Heart right ventricle (tissue), 16 donors: ENCODE measurements at regions of chr9 and their contacts with region 1.

Region 1: GRCh38 chr9:136363606-136364370 is at the start of gene DNLZ:
- DNase-seq: peak; percentile 81 to 89
- ATAC-seq: peak; percentile 27 to 87 (median 51)
- H3K4me3 ChIP-seq: peak within 1 kb of the TSS; percentile 57 to 100 (median 75)
- H3K27ac ChIP-seq: peak within 1 kb of the TSS; percentile 83 to 100 (median 95)
- H3K4me1 ChIP-seq: peaks cover 13 to 53% (median 31%) of the 10 kb centered on the region in 9 donors
- H3K27me3 ChIP-seq: no peaks in the 10 kb centered on the region
- CTCF ChIP-seq: peak; percentile 95 to 100 (median 98)
- total RNA-seq, gene DNLZ: 23.3 to 39.5 (median 30.7) TPM

Region 2: DNA sequence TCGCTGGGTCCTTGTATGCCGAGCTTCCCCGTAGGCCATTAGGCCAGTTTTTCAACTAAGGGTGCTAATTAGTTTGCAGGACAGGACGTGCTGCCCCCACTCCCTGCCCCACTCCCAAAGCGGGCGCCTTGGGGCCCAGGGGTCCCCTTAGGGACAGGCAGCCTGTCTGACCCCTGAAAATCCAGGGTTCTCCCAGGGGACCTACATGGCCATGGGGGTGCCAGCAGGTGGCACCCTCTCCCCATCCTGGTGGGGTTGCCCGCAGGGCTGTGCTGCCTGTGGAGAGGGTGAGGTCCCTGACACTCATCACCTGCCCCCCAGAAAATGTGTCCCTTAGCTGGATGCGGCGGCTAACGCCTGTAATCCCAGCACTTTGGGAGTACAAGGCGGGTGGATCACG is 51.4 kb before region 1 on chr9:
- intact Hi-C with region 1: loop called in 1 of 10 experiments (anchors 1 kb)
- DNase-seq: peak in 1 of 2 donors; percentile 56
- ATAC-seq: peak in 7 of 8 donors; percentile 71 to 82 (median 76)
- H3K4me3 ChIP-seq: no peak overlapping the region
- H3K27ac ChIP-seq: no peak overlapping the region
- H3K4me1 ChIP-seq: no peaks in the 10 kb centered on the region
- H3K27me3 ChIP-seq: peaks cover 0 to 34% (median 25%) of the 10 kb centered on the region in 7 donors
- CTCF ChIP-seq: peak; percentile 31 to 68 (median 61)

Region 3: GRCh38 chr9:136327313-136327974 is 36.3 kb before region 1 on chr9 and contains the start of gene GPSM1:
- intact Hi-C with region 1: loop called in 1 of 10 experiments (anchors 5 kb)
- DNase-seq: peak; percentile 66 to 73
- ATAC-seq: peak; percentile 2 to 54 (median 27)
- H3K4me3 ChIP-seq: peak within 1 kb of the TSS; percentile 55 to 91 (median 74)
- H3K27ac ChIP-seq: peak within 1 kb of the TSS; percentile 18 to 86 (median 83)
- H3K4me1 ChIP-seq: peaks cover 24 to 56% (median 39%) of the 10 kb centered on the region in 9 donors
- H3K27me3 ChIP-seq: peaks cover 0 to 23% (median 0%) of the 10 kb centered on the region in 7 donors
- CTCF ChIP-seq: no peak
- total RNA-seq, gene GPSM1: 19.4 to 50.2 (median 24.8) TPM

Region 4: DNA sequence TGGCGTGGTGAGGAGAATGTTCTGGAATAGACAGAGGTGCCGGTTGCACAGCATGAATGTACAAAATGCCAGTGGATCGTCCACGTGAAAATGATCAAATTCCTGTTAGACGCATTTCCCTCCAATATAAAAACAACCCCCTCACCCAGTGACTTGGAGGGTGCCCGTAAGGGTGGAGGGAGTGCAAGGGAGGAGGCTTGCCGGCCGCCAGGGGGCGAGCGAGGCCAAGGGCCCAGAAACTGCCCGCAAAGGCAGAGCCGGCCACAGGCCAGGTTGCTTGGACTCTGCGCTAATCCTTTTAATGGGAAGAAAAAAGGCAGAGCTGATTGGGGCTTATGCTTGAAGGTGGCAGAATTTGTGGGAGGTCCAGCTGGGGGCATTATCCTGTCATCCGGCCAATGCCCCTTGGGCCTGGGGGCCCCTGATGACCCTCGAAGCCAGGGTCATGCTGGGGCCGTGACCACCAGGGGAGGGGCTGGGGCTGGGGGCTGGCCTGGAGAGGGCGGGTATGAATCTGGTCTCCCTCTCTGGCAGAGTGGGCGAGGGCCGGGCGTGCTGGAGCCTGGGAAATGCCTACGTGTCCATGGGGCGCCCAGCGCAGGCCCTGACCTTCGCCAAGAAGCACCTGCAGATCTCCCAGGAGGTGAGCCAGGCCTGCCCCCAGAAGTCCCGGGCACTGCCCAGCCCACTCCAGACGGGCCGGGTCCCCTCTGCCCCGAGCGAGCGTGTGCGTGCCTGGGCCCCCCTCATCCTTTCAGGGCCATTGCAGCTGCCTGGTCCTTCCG is 24.4 kb before region 1 on chr9:
- intact Hi-C with region 1: loop called in 3 of 10 experiments (anchors 1 to 2 kb)
- DNase-seq: peak in 1 of 2 donors; percentile 79
- ATAC-seq: peak in 4 of 8 donors; percentile 23 to 53 (median 31)
- H3K4me3 ChIP-seq: no peak overlapping the region
- H3K27ac ChIP-seq: peak overlapping the region in 5 of 10 donors; percentile 14 to 90 (median 26)
- H3K4me1 ChIP-seq: peaks cover 9 to 42% (median 29%) of the 10 kb centered on the region in 9 donors
- H3K27me3 ChIP-seq: no peaks in the 10 kb centered on the region
- CTCF ChIP-seq: peak; percentile 76 to 91 (median 84)